ENCODE measurements at regions of chr14 and their contacts with region 1.

Region 1: GRCh38 chr14:73825551-73826188 is 26.0 kb upstream of the PTGR2 start:
- DNase-seq: peak; percentile 95
- ATAC-seq: peak; percentile 96 to 97
- H3K4me3 ChIP-seq: no peak overlapping the region
- H3K27ac ChIP-seq: no peak overlapping the region
- H3K4me1 ChIP-seq: peaks cover 9% of the 10 kb centered on the region
- H3K27me3 ChIP-seq: no peaks in the 10 kb centered on the region
- CTCF ChIP-seq: peak; percentile 95

Region 2: GRCh38 chr14:73728717-73729330 is 96.8 kb before region 1 on chr14:
- intact Hi-C with region 1: loop called (anchors 10 kb)
- DNase-seq: peak; percentile 87
- ATAC-seq: peak; percentile 83 to 92
- H3K4me3 ChIP-seq: no peak overlapping the region
- H3K27ac ChIP-seq: peak overlapping the region; percentile 31
- H3K4me1 ChIP-seq: peaks cover 54% of the 10 kb centered on the region
- H3K27me3 ChIP-seq: no peaks in the 10 kb centered on the region
- CTCF ChIP-seq: peak; percentile 96

Region 3: DNA sequence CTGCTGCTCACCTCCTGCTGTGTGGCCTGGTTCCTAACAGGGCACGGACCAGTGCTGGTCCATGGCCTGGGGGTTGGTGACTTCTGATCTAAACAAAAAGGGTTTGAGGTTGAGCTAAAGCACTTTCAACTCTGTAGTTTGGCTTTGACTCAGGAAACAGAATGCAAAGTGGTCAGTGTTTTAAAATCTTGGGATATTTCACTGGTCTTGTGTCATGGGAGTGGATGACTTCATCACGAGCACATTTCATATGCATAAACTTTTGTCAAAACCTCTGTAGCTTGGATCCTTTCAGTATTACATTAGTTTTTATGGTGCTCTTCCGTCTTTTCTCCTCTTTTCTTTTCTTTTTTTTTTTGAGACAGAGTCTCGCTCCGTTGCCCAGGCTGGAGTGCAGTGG is 98.7 kb after region 1 on chr14:
- intact Hi-C with region 1: no loop called
- DNase-seq: no peak
- ATAC-seq: no peak
- H3K4me3 ChIP-seq: no peak overlapping the region
- H3K27ac ChIP-seq: no peak overlapping the region
- H3K4me1 ChIP-seq: no peaks in the 10 kb centered on the region
- H3K27me3 ChIP-seq: no peaks in the 10 kb centered on the region
- CTCF ChIP-seq: no peak

Measured in lower lobe of right lung (tissue), 2 donors.